ENCODE measurements at regions of chr5 and their contacts with region 1.

Region 1: GRCh38 chr5:68287976-68288706 is 72.6 kb downstream of the PIK3R1 start:
- DNase-seq: peak; percentile 8 to 78 (median 52)
- ATAC-seq: peak; percentile 69
- H3K4me3 ChIP-seq: peak overlapping the region; percentile 52 to 64
- H3K4me3 Mint-ChIP-seq: peak overlapping the region; percentile 93
- H3K27ac ChIP-seq: peak overlapping the region; percentile 40 to 74
- H3K27ac Mint-ChIP-seq: peak overlapping the region; percentile 93
- H3K4me1 ChIP-seq: peaks cover 74% of the 10 kb centered on the region
- H3K4me1 Mint-ChIP-seq: peaks cover 87% of the 10 kb centered on the region
- H3K27me3 ChIP-seq: no peaks in the 10 kb centered on the region
- H3K27me3 Mint-ChIP-seq: no peaks in the 10 kb centered on the region
- CTCF ChIP-seq: no peak

Region 2: DNA sequence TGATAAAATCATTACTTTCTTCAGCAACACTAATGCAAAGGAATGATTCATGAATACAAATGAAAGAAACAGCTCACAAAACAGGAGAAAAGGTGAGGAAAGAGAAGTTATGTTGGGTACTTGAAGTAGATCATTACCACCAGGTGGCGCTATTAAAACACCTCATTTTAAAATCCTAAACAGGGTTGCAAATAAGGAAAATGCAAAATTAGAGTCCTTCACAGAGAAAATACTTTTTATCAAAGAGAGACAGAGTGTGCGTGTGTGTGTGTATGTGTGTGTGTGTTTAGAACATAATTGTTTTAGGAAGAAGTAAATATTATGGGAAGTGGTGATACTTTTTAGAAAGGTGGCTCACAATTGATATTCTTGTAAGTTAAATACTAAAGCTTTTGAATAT is 1042.0 kb before region 1 on chr5:
- CTCF ChIA-PET with region 1: interaction called, 16 read pairs
- POLR2A ChIA-PET with region 1: no interaction called
- intact Hi-C with region 1: loop called in 1 of 2 experiments (anchors 5 kb)
- DNase-seq: peak in 3 of 9 experiments; percentile 39 to 80 (median 74)
- ATAC-seq: no peak
- H3K4me3 ChIP-seq: no peak overlapping the region
- H3K4me3 Mint-ChIP-seq: no peak overlapping the region
- H3K27ac ChIP-seq: no peak overlapping the region
- H3K27ac Mint-ChIP-seq: no peak overlapping the region
- H3K4me1 ChIP-seq: peaks cover 9% of the 10 kb centered on the region
- H3K4me1 Mint-ChIP-seq: peaks cover 11% of the 10 kb centered on the region
- H3K27me3 ChIP-seq: no peaks in the 10 kb centered on the region
- H3K27me3 Mint-ChIP-seq: no peaks in the 10 kb centered on the region
- CTCF ChIP-seq: peak; percentile 95

Region 3: GRCh38 chr5:68272289-68272688 is 15.9 kb before region 1 on chr5:
- CTCF ChIA-PET with region 1: interaction called, 54 read pairs
- POLR2A ChIA-PET with region 1: interaction called, 4 read pairs
- intact Hi-C with region 1: no loop called
- DNase-seq: peak in 2 of 9 experiments; percentile 38 to 58
- ATAC-seq: no peak
- H3K4me3 ChIP-seq: no peak overlapping the region
- H3K4me3 Mint-ChIP-seq: no peak overlapping the region
- H3K27ac ChIP-seq: no peak overlapping the region
- H3K27ac Mint-ChIP-seq: peak overlapping the region; percentile 52
- H3K4me1 ChIP-seq: peaks cover 64% of the 10 kb centered on the region
- H3K4me1 Mint-ChIP-seq: peaks cover 76% of the 10 kb centered on the region
- H3K27me3 ChIP-seq: no peaks in the 10 kb centered on the region
- H3K27me3 Mint-ChIP-seq: no peaks in the 10 kb centered on the region
- CTCF ChIP-seq: peak; percentile 66

Region 4: GRCh38 chr5:68433923-68434879 is 146.1 kb after region 1 on chr5:
- CTCF ChIA-PET with region 1: interaction called, 11 read pairs
- POLR2A ChIA-PET with region 1: no interaction called
- intact Hi-C with region 1: no loop called
- DNase-seq: peak; percentile 54 to 95 (median 87)
- ATAC-seq: peak; percentile 96
- H3K4me3 ChIP-seq: peak overlapping the region; percentile 16
- H3K4me3 Mint-ChIP-seq: peak overlapping the region; percentile 73
- H3K27ac ChIP-seq: peak overlapping the region in 1 of 2 experiments; percentile 79
- H3K27ac Mint-ChIP-seq: peak overlapping the region; percentile 84
- H3K4me1 ChIP-seq: peaks cover 20% of the 10 kb centered on the region
- H3K4me1 Mint-ChIP-seq: peaks cover 36% of the 10 kb centered on the region
- H3K27me3 ChIP-seq: no peaks in the 10 kb centered on the region
- H3K27me3 Mint-ChIP-seq: no peaks in the 10 kb centered on the region
- CTCF ChIP-seq: no peak

Region 5: DNA sequence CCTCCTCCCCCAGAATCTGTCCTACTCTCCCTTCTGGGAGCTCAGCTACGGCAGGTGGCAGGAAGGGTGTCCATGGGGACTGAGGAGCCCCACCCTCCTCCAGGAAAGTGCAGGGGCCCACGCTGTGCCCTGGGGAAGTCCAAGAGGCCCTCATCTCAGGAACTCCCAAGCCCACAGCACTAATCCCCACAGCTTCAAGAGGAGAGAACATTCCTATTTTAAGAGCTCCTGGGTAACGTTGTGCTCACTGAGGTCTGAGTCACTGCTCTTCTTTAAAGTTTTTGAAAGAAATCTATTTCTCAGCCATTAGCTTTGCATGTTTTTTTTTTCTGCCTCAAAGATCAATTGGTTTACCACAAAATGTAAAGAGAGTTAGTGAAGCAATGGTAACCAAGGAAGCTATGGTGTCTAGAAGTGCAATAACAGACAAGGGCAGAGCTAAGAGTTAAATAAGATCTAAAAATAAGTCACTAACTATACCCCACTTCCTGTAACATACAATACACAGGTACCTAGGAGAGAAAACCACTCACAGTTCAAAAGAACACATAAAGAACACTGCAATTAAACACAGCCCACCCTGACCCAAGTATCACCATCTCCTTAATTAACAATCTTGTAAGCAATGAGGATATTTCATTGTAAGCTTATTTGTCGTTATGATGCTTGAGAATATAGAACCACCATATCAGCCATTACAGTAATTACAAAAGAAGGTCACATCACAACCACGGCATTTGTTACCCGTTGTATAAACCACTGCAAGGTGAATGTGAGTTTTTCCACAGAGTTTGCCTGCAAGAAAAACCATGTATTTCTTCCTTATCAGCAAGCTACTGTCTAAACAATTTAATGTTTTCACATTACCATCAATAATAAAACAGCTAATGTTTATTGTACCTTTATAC is 423.4 kb after region 1 on chr5:
- CTCF ChIA-PET with region 1: no interaction called
- POLR2A ChIA-PET with region 1: no interaction called
- intact Hi-C with region 1: loop called in 1 of 2 experiments (anchors 10 kb)
- DNase-seq: peak in 2 of 9 experiments; percentile 50 to 76
- ATAC-seq: peak; percentile 94
- H3K4me3 ChIP-seq: peak overlapping the region; percentile 2 to 20
- H3K4me3 Mint-ChIP-seq: peak overlapping the region; percentile 57
- H3K27ac ChIP-seq: peak overlapping the region; percentile 45 to 72
- H3K27ac Mint-ChIP-seq: peak overlapping the region; percentile 88
- H3K4me1 ChIP-seq: peaks cover 29% of the 10 kb centered on the region
- H3K4me1 Mint-ChIP-seq: peaks cover 38% of the 10 kb centered on the region
- H3K27me3 ChIP-seq: no peaks in the 10 kb centered on the region
- H3K27me3 Mint-ChIP-seq: no peaks in the 10 kb centered on the region
- CTCF ChIP-seq: no peak

Region 6: DNA sequence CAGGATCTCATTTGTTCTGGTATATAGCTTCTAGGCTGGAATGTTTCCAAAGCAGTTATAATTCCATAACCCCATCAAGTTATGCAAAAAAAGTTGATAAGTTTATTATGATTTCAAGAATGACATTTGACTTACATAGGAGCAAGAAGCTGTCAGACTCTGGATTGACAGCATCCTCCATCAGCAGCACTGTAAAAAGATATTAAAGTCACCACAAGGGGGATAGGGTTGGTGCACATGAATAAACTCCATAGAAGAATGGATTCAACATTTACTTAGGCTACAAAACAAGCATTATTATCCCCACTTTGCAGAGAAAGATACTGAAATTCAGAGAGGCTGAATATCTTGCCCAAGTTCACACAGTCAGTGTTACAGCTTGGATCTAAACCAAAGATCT is 596.7 kb after region 1 on chr5:
- CTCF ChIA-PET with region 1: interaction called, 3 read pairs
- POLR2A ChIA-PET with region 1: no interaction called
- intact Hi-C with region 1: loop called (anchors 10 kb)
- DNase-seq: peak in 2 of 9 experiments; percentile 18 to 35
- ATAC-seq: no peak
- H3K4me3 ChIP-seq: no peak overlapping the region
- H3K4me3 Mint-ChIP-seq: no peak overlapping the region
- H3K27ac ChIP-seq: no peak overlapping the region
- H3K27ac Mint-ChIP-seq: no peak overlapping the region
- H3K4me1 ChIP-seq: peaks cover 18% of the 10 kb centered on the region
- H3K4me1 Mint-ChIP-seq: peaks cover 29% of the 10 kb centered on the region
- H3K27me3 ChIP-seq: no peaks in the 10 kb centered on the region
- H3K27me3 Mint-ChIP-seq: no peaks in the 10 kb centered on the region
- CTCF ChIP-seq: peak; percentile 43

Region 7: DNA sequence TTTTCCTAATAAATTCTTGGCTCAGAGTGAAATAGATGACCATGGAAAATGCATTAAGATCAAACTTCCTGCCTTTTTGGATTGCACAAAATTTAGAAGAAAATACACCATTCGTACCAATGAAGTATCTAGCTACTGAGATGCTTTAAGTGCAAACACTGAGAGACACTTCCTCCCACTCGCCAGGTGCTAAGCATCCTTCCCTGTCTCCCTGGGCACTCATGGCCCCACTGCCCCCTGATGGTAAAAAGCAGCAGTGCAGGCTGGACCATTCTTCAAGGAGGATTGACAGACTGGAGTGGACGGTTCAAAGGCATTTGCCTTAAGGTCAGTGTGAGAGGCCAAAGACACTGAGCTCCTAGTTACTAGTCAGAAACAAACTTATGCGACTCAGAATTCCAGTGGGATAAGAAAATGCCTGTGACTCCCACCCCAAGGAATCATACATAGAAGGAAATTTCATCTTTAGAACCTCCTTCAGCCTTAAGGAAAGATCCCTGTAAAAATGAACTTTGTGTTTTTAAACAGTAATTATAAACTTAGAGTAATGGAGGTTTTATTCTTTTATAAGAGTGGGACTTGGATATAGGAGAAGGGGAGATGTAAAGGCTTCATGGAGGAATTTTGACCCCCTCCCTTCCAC is 719.7 kb after region 1 on chr5:
- CTCF ChIA-PET with region 1: interaction called, 22 read pairs
- POLR2A ChIA-PET with region 1: no interaction called
- intact Hi-C with region 1: loop called (anchors 1 to 2 kb)
- DNase-seq: peak; percentile 44 to 83 (median 69)
- ATAC-seq: peak; percentile 94
- H3K4me3 ChIP-seq: no peak overlapping the region
- H3K4me3 Mint-ChIP-seq: no peak overlapping the region
- H3K27ac ChIP-seq: no peak overlapping the region
- H3K27ac Mint-ChIP-seq: no peak overlapping the region
- H3K4me1 ChIP-seq: no peaks in the 10 kb centered on the region
- H3K4me1 Mint-ChIP-seq: no peaks in the 10 kb centered on the region
- H3K27me3 ChIP-seq: no peaks in the 10 kb centered on the region
- H3K27me3 Mint-ChIP-seq: peaks cover 4% of the 10 kb centered on the region
- CTCF ChIP-seq: peak; percentile 82

Measured in CD8-positive, alpha-beta T cell (primary cell).